Activated T-helper 2 cell treated with anti-CD3 and anti-CD28 coated beads, Interferon-gamma antibody, Interleukin-2, Interleukin-4, amounts not matched to agents 10 μg/mL and 5 μg/mL and 100 μg/mL, durations not matched to agents 14 hours and 24 hours and 36 hours (primary cell): ENCODE measurements at regions of chr7 and their contacts with region 1.

Region 1: DNA sequence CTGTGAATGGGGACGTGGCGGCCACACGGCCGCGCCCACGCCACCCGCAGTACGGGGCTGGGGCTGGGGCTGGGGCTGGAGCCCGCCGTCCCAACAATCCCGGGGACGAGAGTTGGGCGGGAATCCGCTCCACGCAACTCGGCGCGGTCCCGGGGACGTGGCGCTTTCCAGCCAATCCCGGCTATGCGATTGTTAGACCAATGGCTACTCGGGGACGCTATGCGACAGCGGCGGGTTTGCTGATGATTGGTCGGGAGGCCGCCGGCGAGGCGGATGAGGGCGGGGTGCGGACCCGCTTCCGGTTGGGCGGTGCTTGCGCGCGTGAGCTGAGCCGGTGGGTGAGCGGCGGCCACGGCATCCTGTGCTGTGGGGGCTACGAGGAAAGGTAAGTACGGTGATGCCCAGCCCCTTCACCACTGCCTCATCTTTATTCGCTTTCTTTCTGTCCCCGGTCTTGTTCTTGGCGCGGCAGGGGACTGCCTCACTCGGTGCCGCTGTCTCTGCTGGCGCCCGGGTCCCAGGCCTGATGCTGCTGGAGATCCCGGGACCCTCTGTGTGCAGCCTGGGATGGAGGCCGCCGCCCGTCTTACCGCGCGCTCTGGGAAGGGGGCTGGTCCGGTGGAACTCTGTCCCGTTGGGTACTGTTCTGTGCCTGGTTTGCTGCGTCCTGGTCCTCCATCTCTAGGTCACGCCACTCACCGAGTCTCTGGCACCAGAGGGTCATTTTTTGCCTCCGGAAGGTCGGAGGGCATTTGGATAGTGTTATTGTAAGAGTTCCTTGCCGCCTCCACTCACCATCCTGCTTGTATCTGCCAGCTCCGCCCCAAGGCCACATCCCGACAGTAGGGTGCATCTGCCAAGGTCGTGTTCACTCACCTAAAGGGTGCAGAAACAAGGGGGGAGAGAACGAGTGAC is at the start of gene CALU:
- DNase-seq: peak; percentile 94
- H3K4me3 Mint-ChIP-seq: peak within 1 kb of the TSS; percentile 98
- H3K27ac Mint-ChIP-seq: peak within 1 kb of the TSS; percentile 95
- H3K4me1 Mint-ChIP-seq: peaks cover 33% of the 10 kb centered on the region
- H3K27me3 Mint-ChIP-seq: peaks cover 3% of the 10 kb centered on the region
- total RNA-seq, gene CALU: 53.7 and 57.4 TPM in 2 replicates

Region 2: GRCh38 chr7:128259131-128259800 is 480.0 kb before region 1 on chr7:
- intact Hi-C with region 1: no loop called
- DNase-seq: no peak
- H3K4me3 Mint-ChIP-seq: no peak overlapping the region
- H3K27ac Mint-ChIP-seq: no peak overlapping the region
- H3K4me1 Mint-ChIP-seq: no peaks in the 10 kb centered on the region
- H3K27me3 Mint-ChIP-seq: peaks cover 4% of the 10 kb centered on the region

Region 3: DNA sequence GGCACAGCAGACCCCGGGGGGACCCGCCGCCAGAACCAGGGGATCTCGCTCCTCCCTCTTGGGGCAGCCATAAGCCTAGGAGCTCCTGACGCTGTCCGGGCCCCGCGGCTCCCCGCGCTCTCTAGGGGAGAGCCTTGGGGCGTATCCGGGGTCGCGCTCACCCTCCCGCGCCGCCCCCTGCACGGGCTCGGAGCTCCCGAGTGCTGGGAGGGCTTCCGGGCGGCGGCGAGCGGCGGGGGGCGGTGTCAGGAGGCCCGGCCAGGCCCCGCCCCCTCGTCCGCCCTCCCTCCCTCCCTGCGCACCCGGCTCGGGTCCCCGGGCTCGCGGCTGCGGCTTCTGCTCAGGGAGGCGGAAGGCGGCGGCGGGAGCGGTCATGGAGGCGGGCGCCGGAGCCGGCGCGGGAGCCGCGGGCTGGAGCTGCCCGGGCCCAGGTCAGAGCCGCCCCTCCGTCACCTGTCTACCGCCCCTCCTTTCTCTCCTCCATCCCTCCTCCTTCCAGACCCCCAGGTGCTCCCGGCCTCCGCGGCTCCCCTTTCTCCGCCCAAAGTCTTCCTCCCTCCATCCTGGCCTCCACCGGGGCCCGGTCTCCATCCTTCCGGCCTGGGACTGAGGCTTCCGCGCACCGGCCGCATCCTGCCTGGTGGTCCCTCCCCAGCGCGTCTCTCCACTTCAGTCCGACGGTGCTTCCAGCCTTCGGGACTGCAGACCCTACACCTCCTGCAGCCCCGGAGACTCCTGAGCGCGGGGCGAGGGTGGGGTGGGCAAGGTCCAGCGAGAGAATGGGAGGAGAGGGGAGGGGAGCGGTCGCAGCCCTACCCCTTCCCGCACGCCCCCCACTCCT is 52.0 kb after region 1 on chr7:
- intact Hi-C with region 1: loop called (anchors 5 kb)
- DNase-seq: peak; percentile 69
- H3K4me3 Mint-ChIP-seq: peak overlapping the region; percentile 84
- H3K27ac Mint-ChIP-seq: no peak overlapping the region
- H3K4me1 Mint-ChIP-seq: peaks cover 10% of the 10 kb centered on the region
- H3K27me3 Mint-ChIP-seq: peaks cover 32% of the 10 kb centered on the region

Region 4: GRCh38 chr7:128862571-128863432 is 123.5 kb after region 1 on chr7 and contains the start of gene ATP6V1F:
- intact Hi-C with region 1: loop called (anchors 2 kb)
- DNase-seq: peak; percentile 99
- H3K4me3 Mint-ChIP-seq: peak within 1 kb of the TSS; percentile 99
- H3K27ac Mint-ChIP-seq: peak within 1 kb of the TSS; percentile 94
- H3K4me1 Mint-ChIP-seq: peaks cover 13% of the 10 kb centered on the region
- H3K27me3 Mint-ChIP-seq: peaks cover 1% of the 10 kb centered on the region
- total RNA-seq, gene ATP6V1F: 123 and 132 TPM in 2 replicates

Region 5: GRCh38 chr7:128963327-128963757 is 224.0 kb after region 1 on chr7:
- intact Hi-C with region 1: no loop called
- DNase-seq: no peak
- H3K4me3 Mint-ChIP-seq: peak overlapping the region; percentile 30
- H3K27ac Mint-ChIP-seq: peak overlapping the region; percentile 78
- H3K4me1 Mint-ChIP-seq: peaks cover 31% of the 10 kb centered on the region
- H3K27me3 Mint-ChIP-seq: no peaks in the 10 kb centered on the region